B cell (primary cell): ENCODE measurements at regions of chr2 and their contacts with region 1.

Region 1: DNA sequence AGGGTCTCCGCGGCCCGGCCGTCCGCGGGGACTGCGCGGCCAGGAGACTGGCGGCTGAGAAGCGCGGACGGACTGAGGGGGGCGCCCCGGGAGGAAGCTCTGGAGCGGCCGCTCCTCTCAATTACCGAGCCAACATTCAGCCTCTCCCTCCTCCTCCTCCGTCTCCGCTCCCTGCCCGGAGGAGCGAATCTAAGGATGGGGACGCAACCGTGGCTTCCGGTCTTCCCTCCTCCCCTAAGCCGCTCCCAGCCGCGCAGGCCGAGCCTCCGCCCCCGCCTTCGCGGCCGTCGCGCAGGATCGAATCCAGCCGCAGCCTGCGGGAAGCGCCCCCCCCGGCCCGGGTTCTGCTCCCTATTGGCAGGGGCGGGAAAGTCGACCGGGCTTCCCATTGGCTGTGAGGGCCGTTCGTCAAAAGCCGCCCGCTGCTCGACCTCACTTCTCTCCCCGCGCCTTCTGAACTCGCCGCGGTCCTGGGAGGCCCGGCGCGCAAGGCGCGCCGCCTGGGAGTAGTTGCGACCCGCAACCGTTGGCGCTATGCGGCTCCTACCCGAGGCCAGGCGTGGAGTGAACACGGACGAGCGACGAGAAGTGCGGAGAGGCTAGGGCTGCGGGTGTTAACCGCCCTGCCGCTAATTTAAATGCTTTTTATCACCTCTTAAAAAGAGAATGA is at the start of gene HNRNPLL:
- DNase-seq: peak; percentile 89
- ATAC-seq: peak; percentile 86
- H3K4me3 ChIP-seq: peak within 1 kb of the TSS; percentile 71 to 83 (median 81)
- H3K4me3 Mint-ChIP-seq: peak within 1 kb of the TSS; percentile 93
- H3K27ac ChIP-seq: peak within 1 kb of the TSS in 1 of 2 donors; percentile 38
- H3K27ac Mint-ChIP-seq: peak within 1 kb of the TSS; percentile 86
- H3K4me1 ChIP-seq: peaks cover 13 to 27% of the 10 kb centered on the region in 2 donors
- H3K4me1 Mint-ChIP-seq: peaks cover 22% of the 10 kb centered on the region
- H3K27me3 ChIP-seq: peaks cover 0 to 52% (median 32%) of the 10 kb centered on the region in 4 experiments
- H3K27me3 Mint-ChIP-seq: peaks cover 35% of the 10 kb centered on the region
- CTCF ChIP-seq: no peak
- total RNA-seq, gene HNRNPLL: 5.8 and 6.7 TPM in 2 replicates

Region 2: GRCh38 chr2:37832590-37833197 is 770.2 kb before region 1 on chr2:
- CTCF ChIA-PET with region 1: no interaction called
- POLR2A ChIA-PET with region 1: no interaction called
- intact Hi-C with region 1: no loop called
- DNase-seq: peak; percentile 82
- ATAC-seq: peak; percentile 94
- H3K4me3 ChIP-seq: no peak overlapping the region
- H3K4me3 Mint-ChIP-seq: no peak overlapping the region
- H3K27ac ChIP-seq: no peak overlapping the region
- H3K27ac Mint-ChIP-seq: no peak overlapping the region
- H3K4me1 ChIP-seq: no peaks in the 10 kb centered on the region
- H3K4me1 Mint-ChIP-seq: peaks cover 2% of the 10 kb centered on the region
- H3K27me3 ChIP-seq: no peaks in the 10 kb centered on the region
- H3K27me3 Mint-ChIP-seq: no peaks in the 10 kb centered on the region
- CTCF ChIP-seq: peak; percentile 93

Region 3: DNA sequence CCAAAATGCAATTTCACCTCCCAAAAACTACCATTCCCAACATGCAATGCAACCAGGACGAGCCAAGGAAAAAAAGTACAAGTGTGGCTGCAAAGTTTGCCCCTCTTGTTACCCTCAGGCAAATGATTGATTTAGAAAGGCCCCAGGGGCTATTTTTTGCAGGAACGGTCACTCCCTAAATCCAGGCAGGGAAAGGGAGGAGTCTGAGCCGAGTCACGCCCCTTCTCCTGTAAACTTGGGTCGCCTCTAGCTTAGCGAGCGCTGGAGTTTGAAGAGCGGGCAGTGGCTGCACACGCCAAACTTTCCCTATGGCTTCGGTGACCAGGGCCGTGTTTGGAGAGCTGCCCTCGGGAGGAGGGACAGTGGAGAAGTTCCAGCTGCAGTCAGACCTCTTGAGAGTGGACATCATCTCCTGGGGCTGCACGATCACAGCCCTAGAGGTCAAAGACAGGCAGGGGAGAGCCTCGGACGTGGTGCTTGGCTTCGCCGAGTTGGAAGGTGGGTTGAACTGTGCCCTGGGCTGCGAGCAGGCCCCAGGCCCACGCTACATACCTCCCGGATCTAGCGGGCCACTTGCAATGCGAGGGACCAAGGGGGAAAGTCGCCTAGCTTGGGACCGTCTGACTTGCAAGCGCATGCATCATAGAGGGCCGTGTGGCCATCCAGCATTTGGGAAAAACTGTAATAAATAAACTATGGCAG is 63.1 kb after region 1 on chr2 and contains the start of gene GALM:
- CTCF ChIA-PET with region 1: interaction called, 5 read pairs
- POLR2A ChIA-PET with region 1: no interaction called
- intact Hi-C with region 1: loop called (anchors 1 kb)
- DNase-seq: peak; percentile 50
- ATAC-seq: peak; percentile 70
- H3K4me3 ChIP-seq: peak within 1 kb of the TSS; percentile 66 to 90 (median 77)
- H3K4me3 Mint-ChIP-seq: peak within 1 kb of the TSS; percentile 90
- H3K27ac ChIP-seq: peak within 1 kb of the TSS; percentile 46 to 62
- H3K27ac Mint-ChIP-seq: peak within 1 kb of the TSS; percentile 66
- H3K4me1 ChIP-seq: peaks cover 8 to 21% of the 10 kb centered on the region in 2 donors
- H3K4me1 Mint-ChIP-seq: peaks cover 22% of the 10 kb centered on the region
- H3K27me3 ChIP-seq: no peaks in the 10 kb centered on the region
- H3K27me3 Mint-ChIP-seq: no peaks in the 10 kb centered on the region
- CTCF ChIP-seq: no peak
- total RNA-seq, gene GALM: 5.1 and 5.8 TPM in 2 replicates

Region 4: DNA sequence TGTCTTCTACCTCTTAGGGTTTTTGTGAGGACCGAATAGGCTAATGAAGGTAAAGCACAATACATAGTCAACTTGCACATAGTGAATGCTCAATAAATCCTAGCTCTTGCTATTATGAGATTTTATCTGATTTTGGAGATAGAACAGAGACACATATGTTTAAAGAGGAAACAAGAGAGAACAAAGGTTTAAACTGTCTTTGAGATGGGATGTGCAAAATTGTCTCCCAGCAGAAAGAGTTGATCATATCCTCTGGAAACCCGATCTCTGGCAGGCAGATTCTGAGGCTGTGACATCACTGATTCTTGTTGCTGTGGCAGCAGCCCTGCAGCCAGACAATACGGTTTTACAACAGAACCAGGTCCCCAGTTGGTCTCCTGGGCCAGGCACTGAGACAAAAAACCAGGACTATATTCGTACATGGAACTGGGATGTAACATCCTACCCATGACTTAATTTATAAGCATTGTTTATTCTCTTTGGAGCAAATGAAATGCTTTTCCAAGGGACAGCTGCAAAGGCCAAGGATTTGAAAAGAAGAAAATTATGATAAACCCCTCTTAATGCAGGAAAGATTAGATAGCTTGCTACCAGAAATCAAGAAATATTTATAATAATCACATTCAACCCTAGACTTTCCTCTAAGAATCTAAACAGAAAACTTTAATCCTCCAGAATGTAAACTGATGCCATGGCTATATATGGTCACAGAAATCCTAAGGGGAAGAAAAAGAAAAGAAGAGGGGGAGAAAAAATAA is 1768.8 kb after region 1 on chr2:
- CTCF ChIA-PET with region 1: no interaction called
- POLR2A ChIA-PET with region 1: no interaction called
- intact Hi-C with region 1: no loop called
- DNase-seq: no peak
- ATAC-seq: no peak
- H3K4me3 ChIP-seq: no peak overlapping the region
- H3K4me3 Mint-ChIP-seq: no peak overlapping the region
- H3K27ac ChIP-seq: no peak overlapping the region
- H3K27ac Mint-ChIP-seq: no peak overlapping the region
- H3K4me1 ChIP-seq: no peaks in the 10 kb centered on the region
- H3K4me1 Mint-ChIP-seq: no peaks in the 10 kb centered on the region
- H3K27me3 ChIP-seq: no peaks in the 10 kb centered on the region
- H3K27me3 Mint-ChIP-seq: no peaks in the 10 kb centered on the region
- CTCF ChIP-seq: no peak